B cell (primary cell): ENCODE measurements at regions of chr13 and their contacts with region 1.

Region 1: DNA sequence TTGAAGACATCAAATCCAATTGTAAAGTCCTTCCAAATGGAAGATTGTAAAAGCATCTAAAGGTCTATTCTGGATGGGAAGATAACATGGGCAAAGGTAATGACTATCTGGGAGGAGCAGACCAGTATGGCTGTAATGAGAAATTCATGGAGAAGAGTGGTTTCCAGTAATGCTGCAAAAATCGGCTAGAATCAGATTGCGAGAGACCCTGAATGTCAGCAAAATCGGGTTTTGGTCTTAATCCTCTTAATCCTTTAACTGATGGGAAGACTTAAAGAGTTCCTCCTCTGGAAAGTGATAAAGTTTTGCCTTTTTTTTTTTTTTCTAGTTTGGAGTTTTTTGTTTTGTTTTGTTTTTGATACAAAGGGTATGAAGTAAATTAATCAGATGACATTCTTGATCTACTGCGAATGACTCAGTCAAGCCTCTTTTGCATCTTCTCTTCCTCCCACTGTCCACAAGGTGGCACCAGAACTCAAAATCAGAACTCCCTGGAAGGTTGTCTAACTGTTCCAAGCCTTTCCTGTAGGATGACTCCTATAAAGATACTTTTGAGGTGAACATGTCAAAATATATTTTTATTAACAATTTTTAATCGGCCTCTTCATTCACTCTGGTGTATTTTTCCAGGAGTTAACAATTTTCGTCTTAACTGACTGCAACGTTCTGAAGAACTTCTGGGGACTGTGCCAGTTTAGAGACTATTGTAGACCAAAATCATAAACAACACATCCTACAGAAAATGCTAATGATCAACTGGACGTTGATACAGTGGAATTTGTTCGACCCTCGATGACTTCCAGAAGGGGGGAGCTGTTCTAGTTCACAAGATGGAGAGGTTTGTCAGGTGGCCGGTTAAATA is 213.3 kb upstream of the MIR17HG start:
- DNase-seq: peak; percentile 33
- ATAC-seq: peak; percentile 33
- H3K4me3 ChIP-seq: no peak overlapping the region
- H3K4me3 Mint-ChIP-seq: no peak overlapping the region
- H3K27ac ChIP-seq: no peak overlapping the region
- H3K27ac Mint-ChIP-seq: no peak overlapping the region
- H3K4me1 ChIP-seq: no peaks in the 10 kb centered on the region
- H3K4me1 Mint-ChIP-seq: no peaks in the 10 kb centered on the region
- H3K27me3 ChIP-seq: peaks cover 0 to 5% (median 0%) of the 10 kb centered on the region in 4 experiments
- H3K27me3 Mint-ChIP-seq: no peaks in the 10 kb centered on the region
- CTCF ChIP-seq: peak; percentile 77

Region 2: DNA sequence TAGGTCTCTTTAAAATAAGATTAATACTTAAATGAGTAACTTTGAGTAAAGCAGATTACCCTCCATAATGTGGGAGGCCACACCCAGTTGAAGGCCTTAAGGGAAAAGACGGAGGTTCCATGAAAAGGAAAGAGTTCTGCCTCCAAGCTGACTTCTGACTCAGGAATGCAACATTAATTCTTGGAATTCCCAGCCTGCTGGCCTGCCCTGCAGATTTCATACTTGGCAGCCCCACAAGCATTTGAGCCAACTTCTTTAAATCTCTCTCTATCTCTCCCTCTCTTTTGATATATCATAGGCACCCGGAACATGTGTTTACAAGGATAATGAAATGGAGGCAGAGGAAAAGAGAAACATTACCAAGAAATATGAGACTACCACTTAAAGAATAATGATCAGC is 689.0 kb before region 1 on chr13:
- CTCF ChIA-PET with region 1: no interaction called
- POLR2A ChIA-PET with region 1: no interaction called
- intact Hi-C with region 1: no loop called
- DNase-seq: no peak
- ATAC-seq: no peak
- H3K4me3 ChIP-seq: no peak overlapping the region
- H3K4me3 Mint-ChIP-seq: no peak overlapping the region
- H3K27ac ChIP-seq: no peak overlapping the region
- H3K27ac Mint-ChIP-seq: no peak overlapping the region
- H3K4me1 ChIP-seq: no peaks in the 10 kb centered on the region
- H3K4me1 Mint-ChIP-seq: no peaks in the 10 kb centered on the region
- H3K27me3 ChIP-seq: no peaks in the 10 kb centered on the region
- H3K27me3 Mint-ChIP-seq: no peaks in the 10 kb centered on the region
- CTCF ChIP-seq: no peak

Region 3: DNA sequence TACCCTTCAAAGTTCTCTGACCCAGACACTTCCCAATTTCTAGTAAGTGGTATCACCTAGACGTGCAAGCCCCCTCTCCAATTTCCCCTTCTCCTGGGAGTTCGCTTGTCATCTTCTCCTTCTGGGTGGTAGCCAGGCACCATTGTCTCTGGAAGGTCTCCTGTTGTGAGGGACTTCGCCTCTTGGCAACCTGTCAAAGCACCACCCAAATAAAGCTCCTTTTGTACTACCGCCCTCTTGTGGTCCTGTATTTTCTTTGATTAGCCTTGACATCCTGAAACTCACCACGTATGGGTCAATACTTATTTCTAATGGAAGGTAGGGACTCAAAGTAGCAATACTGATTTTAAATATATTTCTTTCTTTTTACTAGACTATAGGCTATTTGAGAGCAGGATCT is 272.4 kb after region 1 on chr13:
- CTCF ChIA-PET with region 1: interaction called, 3 read pairs
- POLR2A ChIA-PET with region 1: no interaction called
- intact Hi-C with region 1: loop called (anchors 1 kb)
- DNase-seq: peak; percentile 52
- ATAC-seq: no peak
- H3K4me3 ChIP-seq: no peak overlapping the region
- H3K4me3 Mint-ChIP-seq: no peak overlapping the region
- H3K27ac ChIP-seq: no peak overlapping the region
- H3K27ac Mint-ChIP-seq: no peak overlapping the region
- H3K4me1 ChIP-seq: no peaks in the 10 kb centered on the region
- H3K4me1 Mint-ChIP-seq: peaks cover 9% of the 10 kb centered on the region
- H3K27me3 ChIP-seq: peaks cover 0 to 3% (median 0%) of the 10 kb centered on the region in 4 experiments
- H3K27me3 Mint-ChIP-seq: peaks cover 3% of the 10 kb centered on the region
- CTCF ChIP-seq: peak; percentile 56